Heart right ventricle (tissue), 16 donors: ENCODE measurements at regions of chr7 and their contacts with region 1.

Region 1: DNA sequence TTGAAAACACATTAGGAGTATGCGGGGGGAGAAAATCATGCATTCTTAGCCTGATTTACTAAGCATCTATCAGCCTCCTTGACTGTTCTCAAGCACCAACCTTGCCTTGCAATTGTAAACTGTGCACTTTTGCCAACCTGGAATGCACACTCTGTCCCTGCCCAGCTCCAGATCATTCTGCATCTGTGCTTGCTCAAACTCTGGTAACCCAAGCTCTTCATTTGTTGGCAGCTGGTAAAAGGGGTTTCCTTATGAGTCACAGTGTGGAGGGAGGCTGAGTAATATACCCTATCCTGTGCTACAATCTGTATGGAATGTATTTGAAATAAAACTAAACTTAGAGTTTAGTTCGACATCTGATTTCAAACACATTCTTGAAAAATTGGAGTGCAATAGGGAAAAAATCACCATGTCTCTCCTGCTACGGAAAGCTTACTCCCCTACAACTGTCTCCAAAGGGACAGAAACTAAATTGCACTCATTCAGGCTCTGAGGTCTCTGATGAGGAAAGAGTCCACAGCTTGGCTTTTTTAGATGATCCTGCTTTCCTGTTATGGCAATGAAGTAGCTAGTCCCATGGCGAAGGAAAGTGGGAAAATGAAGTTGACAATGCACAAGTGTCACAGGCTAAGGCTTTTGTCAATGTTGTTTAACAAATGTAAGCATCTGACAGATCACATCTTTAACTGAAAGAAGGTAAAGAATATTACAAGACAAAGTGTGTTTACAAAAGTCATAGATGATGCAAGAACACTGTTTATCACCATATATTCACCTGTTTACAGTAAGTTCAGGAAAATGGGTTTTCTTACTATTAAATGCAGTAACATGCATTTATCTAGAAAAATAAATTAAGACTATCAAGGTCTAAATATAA is 61.9 kb downstream of the TES start:
- DNase-seq: peak in 1 of 2 donors; percentile 59
- ATAC-seq: peak; percentile 83 to 99 (median 94)
- H3K4me3 ChIP-seq: no peak overlapping the region
- H3K27ac ChIP-seq: peak overlapping the region; percentile 19 to 77 (median 62)
- H3K4me1 ChIP-seq: peaks cover 9 to 43% (median 27%) of the 10 kb centered on the region in 9 donors
- H3K27me3 ChIP-seq: no peaks in the 10 kb centered on the region
- CTCF ChIP-seq: no peak

Region 2: GRCh38 chr7:116322541-116322940 is 50.3 kb after region 1 on chr7:
- intact Hi-C with region 1: loop called in 4 of 10 experiments (anchors 5 kb)
- DNase-seq: no peak
- ATAC-seq: no peak
- H3K4me3 ChIP-seq: no peak overlapping the region
- H3K27ac ChIP-seq: no peak overlapping the region
- H3K4me1 ChIP-seq: peaks cover 0 to 23% (median 10%) of the 10 kb centered on the region in 9 donors
- H3K27me3 ChIP-seq: no peaks in the 10 kb centered on the region
- CTCF ChIP-seq: no peak

Region 3: DNA sequence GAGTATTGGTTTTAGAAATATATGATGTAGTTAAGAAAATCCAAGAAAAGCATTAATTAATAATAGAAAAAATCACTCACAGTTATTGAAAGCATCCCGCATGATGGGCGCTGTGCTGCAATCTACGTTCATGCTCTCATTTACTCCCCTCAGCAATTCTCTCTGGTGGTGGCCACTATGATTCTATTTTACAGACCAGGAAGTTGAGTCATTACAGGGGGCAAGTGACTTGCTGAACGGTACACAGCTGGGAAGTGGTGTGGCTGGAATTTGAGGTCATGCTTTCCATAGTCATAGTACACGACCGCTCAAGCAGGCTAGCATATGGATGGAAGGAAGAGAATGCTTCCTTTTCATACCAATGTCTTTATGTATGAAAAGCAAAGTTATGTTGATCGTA is 55.6 kb after region 1 on chr7:
- intact Hi-C with region 1: loop called in 2 of 10 experiments (anchors 5 kb)
- DNase-seq: no peak
- ATAC-seq: peak in 2 of 8 donors; percentile 32 to 44
- H3K4me3 ChIP-seq: no peak overlapping the region
- H3K27ac ChIP-seq: peak overlapping the region in 4 of 10 donors; percentile 6 to 42 (median 38)
- H3K4me1 ChIP-seq: peaks cover 0 to 54% (median 35%) of the 10 kb centered on the region in 9 donors
- H3K27me3 ChIP-seq: no peaks in the 10 kb centered on the region
- CTCF ChIP-seq: no peak

Region 4: GRCh38 chr7:116455009-116455408 is 182.8 kb after region 1 on chr7:
- intact Hi-C with region 1: no loop called
- DNase-seq: no peak
- ATAC-seq: no peak
- H3K4me3 ChIP-seq: no peak overlapping the region
- H3K27ac ChIP-seq: no peak overlapping the region
- H3K4me1 ChIP-seq: peaks cover 0 to 15% (median 3%) of the 10 kb centered on the region in 9 donors
- H3K27me3 ChIP-seq: no peaks in the 10 kb centered on the region
- CTCF ChIP-seq: no peak